Vagina (tissue), 2 donors: ENCODE measurements at regions of chr2 and their contacts with region 1.

Region 1: DNA sequence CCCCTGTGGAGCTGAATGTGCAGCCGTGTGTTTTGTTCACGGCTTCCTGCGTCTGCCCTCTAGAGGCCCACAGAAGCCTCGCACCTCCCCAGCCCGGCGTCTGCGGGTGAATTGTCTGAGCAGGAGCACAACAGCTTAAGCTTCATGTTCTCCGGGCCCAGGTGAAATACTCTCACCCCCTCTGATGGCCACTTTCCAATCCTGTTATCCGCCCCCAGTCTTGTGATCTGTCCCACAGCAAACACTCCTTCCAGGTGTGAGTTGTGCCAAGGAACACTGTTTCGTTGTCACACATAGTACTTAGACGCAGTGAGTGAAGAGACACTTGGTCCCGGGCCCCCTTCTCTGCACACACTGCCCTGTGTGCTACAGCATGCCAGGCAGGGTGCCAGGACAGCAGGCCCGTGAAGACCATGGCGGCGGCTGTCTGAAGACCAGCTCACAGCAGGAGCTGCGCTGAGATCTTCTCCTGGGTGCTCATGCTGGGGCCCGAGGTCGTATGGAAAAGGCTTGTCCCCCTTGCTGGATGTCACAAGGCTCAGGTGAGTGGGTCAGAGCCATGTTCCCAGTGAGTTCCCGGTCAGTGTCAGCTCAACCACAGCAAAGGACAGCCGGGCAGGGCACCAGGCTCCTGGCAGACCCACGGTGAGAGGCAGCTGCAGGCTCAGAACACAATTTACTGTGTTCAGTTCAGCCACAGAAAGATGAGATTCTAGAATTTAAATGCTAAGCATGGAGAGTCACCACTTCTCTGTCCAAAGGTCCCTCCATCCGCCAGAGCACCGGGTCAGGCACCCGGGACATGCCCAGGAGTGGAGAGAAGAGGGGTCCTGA is 6.8 kb upstream of the PXDN start:
- DNase-seq: no peak
- H3K4me3 ChIP-seq: no peak overlapping the region
- H3K27ac ChIP-seq: no peak overlapping the region
- H3K4me1 ChIP-seq: peaks cover 6% of the 10 kb centered on the region
- H3K27me3 ChIP-seq: no peaks in the 10 kb centered on the region
- CTCF ChIP-seq: peak; percentile 62 to 74 (median 72)
- POLR2A ChIP-seq: no peak

Region 2: GRCh38 chr2:1652034-1652790 is 98.9 kb before region 1 on chr2:
- intact Hi-C with region 1: no loop called
- DNase-seq: peak in 1 of 2 donors; percentile 83
- H3K4me3 ChIP-seq: no peak overlapping the region
- H3K27ac ChIP-seq: peak overlapping the region; percentile 74
- H3K4me1 ChIP-seq: peaks cover 21% of the 10 kb centered on the region
- H3K27me3 ChIP-seq: no peaks in the 10 kb centered on the region
- CTCF ChIP-seq: no peak
- POLR2A ChIP-seq: no peak

Region 3: GRCh38 chr2:1781271-1782080 is 30.3 kb after region 1 on chr2:
- intact Hi-C with region 1: no loop called
- DNase-seq: no peak
- H3K4me3 ChIP-seq: no peak overlapping the region
- H3K27ac ChIP-seq: no peak overlapping the region
- H3K4me1 ChIP-seq: no peaks in the 10 kb centered on the region
- H3K27me3 ChIP-seq: no peaks in the 10 kb centered on the region
- CTCF ChIP-seq: no peak
- POLR2A ChIP-seq: no peak

Region 4: GRCh38 chr2:1817256-1818051 is 66.3 kb after region 1 on chr2:
- intact Hi-C with region 1: loop called (anchors 10 kb)
- DNase-seq: peak in 1 of 2 donors; percentile 93
- H3K4me3 ChIP-seq: no peak overlapping the region
- H3K27ac ChIP-seq: peak overlapping the region; percentile 77
- H3K4me1 ChIP-seq: peaks cover 12% of the 10 kb centered on the region
- H3K27me3 ChIP-seq: no peaks in the 10 kb centered on the region
- CTCF ChIP-seq: peak; percentile 60 to 85 (median 74)
- POLR2A ChIP-seq: no peak